GM10248 (cell line): ENCODE measurements at regions of chr3 and their contacts with region 1.

Region 1: GRCh38 chr3:14402304-14402811 is at the start of gene SLC6A6:
- DNase-seq: peak; percentile 91
- CTCF ChIP-seq: peak; percentile 41

Region 2: DNA sequence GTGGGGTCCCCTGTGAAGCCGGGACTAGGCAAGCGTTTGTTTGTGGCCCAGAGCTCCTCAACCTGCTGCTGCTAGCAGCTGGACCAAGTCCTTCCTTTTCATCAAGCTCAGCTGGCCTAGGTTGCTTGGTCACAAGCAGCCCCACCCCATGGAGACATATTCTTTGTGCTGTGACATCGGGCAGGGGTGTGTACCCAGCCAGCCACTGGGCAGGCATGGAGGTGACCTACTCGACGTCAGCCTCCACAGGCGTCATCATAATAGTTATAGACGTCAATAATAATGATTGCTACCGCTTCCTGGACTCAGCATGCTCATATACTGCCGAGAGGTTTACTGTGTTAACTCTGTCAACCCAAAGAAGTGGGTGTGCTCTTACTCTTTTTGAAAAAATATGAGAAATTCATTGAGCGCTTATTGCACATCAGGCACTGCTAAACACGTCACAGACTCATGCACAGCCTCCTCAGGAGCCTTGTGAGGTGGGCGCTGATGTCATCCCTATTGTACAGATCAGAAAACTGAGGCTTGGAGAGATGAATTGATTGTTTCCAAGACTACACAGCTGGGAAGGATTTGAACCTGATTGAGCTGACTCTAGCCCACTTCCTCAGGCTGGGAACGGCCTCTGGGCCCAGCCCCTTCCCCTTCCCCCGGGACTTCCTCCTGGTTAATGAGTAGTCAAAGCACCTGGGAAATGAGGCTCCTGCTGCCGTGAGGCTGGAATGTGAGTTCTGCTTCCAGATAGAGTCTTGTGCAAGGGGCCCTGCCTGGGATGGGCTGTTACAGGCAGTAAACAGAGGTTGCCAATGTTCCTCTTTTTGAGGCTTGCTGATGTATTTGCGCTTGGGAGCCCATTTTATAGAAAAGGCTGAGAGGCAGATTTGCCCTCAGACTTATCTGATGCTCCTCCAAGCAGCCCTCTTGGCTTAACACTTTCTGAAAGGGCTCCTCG is 16.2 kb after region 1 on chr3:
- CTCF ChIA-PET with region 1: interaction called, 18 read pairs
- POLR2A ChIA-PET with region 1: no interaction called
- DNase-seq: no peak
- CTCF ChIP-seq: no peak

Region 3: DNA sequence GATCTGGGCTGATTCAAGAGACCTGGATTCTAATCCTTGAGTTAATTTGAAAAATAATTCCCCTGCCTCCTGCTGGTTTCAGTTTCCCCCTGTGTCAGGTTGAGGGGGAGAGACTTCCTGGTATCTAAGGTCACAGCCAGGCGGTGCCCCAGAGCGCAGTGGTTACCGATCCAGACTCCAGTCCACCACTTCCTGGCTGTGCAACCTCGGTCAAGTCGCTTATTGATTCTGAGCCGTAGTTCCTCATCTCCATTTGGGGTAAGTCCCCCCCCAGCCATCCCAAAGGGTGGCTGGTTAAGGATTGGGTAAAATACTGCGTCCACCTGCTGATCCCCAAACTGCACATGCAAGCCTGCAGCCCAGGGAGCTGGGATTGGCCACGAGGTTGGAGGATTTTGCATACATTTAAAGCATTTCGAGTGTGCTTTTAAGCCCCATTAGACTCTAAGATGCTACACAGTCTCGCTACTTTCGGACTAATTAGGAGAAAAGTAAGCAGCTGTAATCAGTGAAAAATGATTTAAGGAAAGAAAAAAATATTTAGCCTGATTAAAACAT is 23.8 kb after region 1 on chr3:
- CTCF ChIA-PET with region 1: interaction called, 18 read pairs
- POLR2A ChIA-PET with region 1: no interaction called
- DNase-seq: peak; percentile 54
- CTCF ChIP-seq: no peak

Region 4: DNA sequence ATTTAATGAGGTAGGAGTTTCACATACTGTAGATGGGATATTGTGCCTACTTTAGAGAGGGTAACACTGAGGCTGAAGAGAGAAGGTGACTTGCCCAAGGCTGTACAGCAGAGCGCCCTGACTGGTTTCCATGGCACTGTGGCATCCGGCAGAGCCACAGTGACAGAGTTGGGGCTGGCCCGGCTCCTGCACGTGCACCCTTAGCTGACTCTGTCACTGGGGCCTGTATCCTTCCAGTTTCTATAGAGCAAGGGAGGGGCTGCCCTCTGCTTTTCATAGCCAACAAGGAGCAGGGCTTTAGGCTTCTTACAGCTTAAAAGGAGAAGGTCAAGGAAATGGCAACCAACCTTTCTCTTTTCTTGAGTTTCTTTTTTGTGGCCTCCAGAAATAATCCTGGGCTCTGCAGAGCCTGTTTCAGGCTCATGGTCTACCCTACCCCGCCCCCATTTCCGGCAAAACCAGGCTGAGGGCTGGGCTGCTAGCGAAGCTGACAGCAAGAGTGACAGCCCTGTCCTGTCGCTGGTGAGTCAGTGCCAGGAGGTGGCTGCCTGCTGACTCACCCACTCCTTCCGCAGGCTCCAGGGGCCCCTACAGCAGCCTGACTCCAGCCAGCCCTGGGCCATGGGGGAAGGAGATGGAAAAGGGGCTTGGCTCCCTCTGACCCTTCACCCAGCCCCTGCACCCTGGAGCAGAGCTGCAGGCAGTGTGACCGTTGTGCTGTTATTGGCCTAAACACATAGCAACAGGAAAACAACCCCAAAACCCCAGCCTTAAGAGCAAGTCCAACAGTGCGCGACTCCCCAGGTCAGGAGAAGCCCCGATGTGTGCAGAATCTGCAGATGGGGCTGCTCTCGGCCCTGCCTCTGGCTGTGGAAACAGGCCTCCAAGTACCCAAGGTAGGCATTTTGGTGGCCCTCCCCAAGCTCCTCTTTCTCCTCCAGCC is 29.8 kb after region 1 on chr3:
- CTCF ChIA-PET with region 1: interaction called, 18 read pairs
- POLR2A ChIA-PET with region 1: interaction called, 3 read pairs
- DNase-seq: peak; percentile 93
- CTCF ChIP-seq: no peak